ENCODE measurements at regions of chr5 and their contacts with region 1.

Region 1: GRCh38 chr5:164115420-164115819 is 610.0 kb downstream of the MAT2B start:
- DNase-seq: no peak
- H3K4me3 ChIP-seq: no peak overlapping the region
- H3K27ac ChIP-seq: no peak overlapping the region
- H3K4me1 ChIP-seq: no peaks in the 10 kb centered on the region
- H3K27me3 ChIP-seq: no peaks in the 10 kb centered on the region
- CTCF ChIP-seq: no peak
- POLR2A ChIP-seq: no peak

Region 2: GRCh38 chr5:164065266-164065665 is 50.2 kb before region 1 on chr5:
- intact Hi-C with region 1: no loop called
- DNase-seq: no peak
- H3K4me3 ChIP-seq: no peak overlapping the region
- H3K27ac ChIP-seq: no peak overlapping the region
- H3K4me1 ChIP-seq: no peaks in the 10 kb centered on the region
- H3K27me3 ChIP-seq: no peaks in the 10 kb centered on the region
- CTCF ChIP-seq: no peak
- POLR2A ChIP-seq: no peak

Region 3: DNA sequence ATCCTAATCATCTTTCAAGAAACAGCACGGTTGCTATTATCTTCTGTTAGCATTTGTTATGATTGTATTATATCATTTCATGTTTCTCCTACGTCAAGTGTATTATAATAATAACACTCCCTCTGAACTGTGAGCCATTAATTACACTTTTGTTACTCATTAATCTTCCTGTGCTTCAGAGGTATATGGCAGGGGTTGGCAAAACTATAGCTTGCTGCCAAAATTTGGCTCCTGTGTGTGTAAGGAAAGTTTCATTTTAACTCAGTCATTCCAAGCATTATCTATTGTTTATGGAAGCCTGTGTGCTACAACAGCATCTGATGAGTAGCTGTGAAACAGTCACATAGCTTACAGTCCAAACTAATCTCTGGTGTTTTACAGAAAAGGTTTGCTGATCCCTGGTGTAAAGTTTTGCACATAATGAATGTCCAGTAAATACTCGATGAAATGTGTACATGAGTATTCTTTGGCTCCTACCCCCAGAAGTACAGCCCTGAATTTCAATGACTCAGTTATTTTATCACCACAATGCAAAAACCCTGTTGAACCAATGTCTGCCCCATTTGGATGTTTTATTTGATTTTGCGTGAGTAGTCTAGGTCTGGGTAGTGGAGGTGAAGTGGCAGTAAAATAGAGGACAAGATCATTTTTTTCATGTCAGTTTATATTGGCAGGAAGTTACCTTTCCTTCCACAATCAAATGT is 38.2 kb after region 1 on chr5:
- intact Hi-C with region 1: no loop called
- DNase-seq: no peak
- H3K4me3 ChIP-seq: no peak overlapping the region
- H3K27ac ChIP-seq: no peak overlapping the region
- H3K4me1 ChIP-seq: no peaks in the 10 kb centered on the region
- H3K27me3 ChIP-seq: no peaks in the 10 kb centered on the region
- CTCF ChIP-seq: no peak
- POLR2A ChIP-seq: no peak

Region 4: GRCh38 chr5:164593982-164594381 is 478.6 kb after region 1 on chr5:
- intact Hi-C with region 1: loop called (anchors 5 kb)
- DNase-seq: no peak
- H3K4me3 ChIP-seq: no peak overlapping the region
- H3K27ac ChIP-seq: no peak overlapping the region
- H3K4me1 ChIP-seq: no peaks in the 10 kb centered on the region
- H3K27me3 ChIP-seq: no peaks in the 10 kb centered on the region
- CTCF ChIP-seq: no peak
- POLR2A ChIP-seq: no peak

Measured in breast epithelium (tissue), 4 donors.